ENCODE measurements at regions of chr7 and their contacts with region 1.

Region 1: DNA sequence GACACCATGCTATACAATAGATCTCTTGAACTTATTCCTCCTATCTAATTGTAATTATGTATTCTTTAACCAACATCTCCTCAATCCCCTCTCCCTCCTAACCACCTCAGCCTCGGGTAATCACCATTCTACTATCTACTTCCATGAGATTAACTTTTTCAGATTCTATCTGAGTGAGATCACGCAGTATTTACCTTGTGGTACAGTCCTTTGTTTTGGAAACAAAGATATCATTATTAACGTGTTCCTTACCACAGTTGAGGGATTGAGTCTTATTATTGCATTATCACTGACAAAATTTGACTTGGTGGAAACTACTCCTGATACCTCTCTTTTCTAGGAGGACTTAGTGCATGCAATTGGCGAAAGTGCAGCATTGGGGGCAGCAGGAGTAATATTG is 26.0 kb upstream of the HYAL4 start:
- DNase-seq: no peak
- H3K4me3 ChIP-seq: no peak overlapping the region
- CTCF ChIP-seq: no peak
- POLR2A ChIP-seq: no peak

Region 2: GRCh38 chr7:123712619-123713018 is 106.4 kb before region 1 on chr7:
- intact Hi-C with region 1: no loop called
- DNase-seq: no peak
- H3K4me3 ChIP-seq: no peak overlapping the region
- CTCF ChIP-seq: no peak
- POLR2A ChIP-seq: no peak

Region 3: DNA sequence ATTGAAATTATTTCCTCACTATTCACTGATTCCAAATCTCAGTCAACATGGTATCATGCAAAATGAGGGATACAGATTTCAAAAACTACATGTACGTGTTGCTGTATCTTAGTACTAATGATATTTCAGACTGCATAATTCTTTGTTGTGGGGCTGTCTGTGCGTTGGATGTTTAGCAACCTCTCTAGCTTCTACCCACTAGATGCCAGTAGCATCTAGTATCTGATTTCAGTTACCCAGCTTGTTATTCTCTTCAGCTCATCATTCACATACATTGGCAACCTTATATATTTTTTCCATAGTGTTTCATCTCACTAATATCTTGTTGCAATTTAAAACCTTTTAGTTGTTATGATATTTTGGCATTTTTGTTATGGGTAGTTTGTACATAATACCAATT is 47.7 kb before region 1 on chr7:
- intact Hi-C with region 1: loop called (anchors 2 kb)
- DNase-seq: no peak
- H3K4me3 ChIP-seq: no peak overlapping the region
- CTCF ChIP-seq: no peak
- POLR2A ChIP-seq: no peak